ENCODE measurements at regions of chr19 and their contacts with region 1.

Region 1: DNA sequence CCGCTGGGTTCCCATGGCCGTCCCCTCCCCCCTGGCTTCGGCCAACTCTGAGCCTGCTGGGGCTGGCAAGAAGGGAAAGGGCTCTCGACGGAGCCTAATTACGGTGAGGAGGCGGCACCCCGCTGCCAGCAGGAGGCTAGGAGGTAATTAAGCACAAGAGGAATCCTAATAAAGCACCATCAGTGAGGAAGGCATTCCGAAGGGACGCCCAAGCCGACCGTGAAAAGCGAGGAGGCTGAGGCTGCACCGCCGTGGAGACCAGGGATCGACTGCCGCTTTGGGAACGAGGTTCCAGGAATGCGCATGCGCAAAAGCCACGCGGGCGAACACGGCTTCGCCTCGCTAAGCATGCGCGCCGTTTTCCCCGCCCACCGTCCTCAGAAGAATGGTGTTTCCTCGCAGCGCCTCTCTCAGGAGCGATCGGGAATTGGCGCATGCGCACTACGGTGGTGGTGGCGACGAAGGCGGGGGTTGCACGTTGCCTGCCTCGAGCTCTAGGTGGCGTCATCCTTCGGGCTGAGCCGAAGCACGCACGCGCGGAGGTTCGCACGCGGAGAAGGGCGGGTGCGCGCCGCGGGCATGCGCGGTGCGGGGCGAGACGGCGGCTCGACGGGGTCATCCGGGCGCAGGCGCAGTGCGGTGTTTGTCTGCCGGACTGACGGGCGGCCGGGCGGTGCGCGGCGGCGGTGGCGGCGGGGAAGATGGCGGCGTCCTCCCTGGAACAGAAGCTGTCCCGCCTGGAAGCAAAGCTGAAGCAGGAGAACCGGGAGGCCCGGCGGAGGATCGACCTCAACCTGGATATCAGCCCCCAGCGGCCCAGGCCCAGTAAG is at the start of gene MAP2K7:
- DNase-seq: peak; percentile 99
- H3K4me3 ChIP-seq: peak within 1 kb of the TSS; percentile 92
- H3K27ac ChIP-seq: peak within 1 kb of the TSS; percentile 77
- H3K4me1 ChIP-seq: peaks cover 13% of the 10 kb centered on the region
- H3K27me3 ChIP-seq: no peaks in the 10 kb centered on the region
- CTCF ChIP-seq: peak; percentile 82
- total RNA-seq, gene MAP2K7: 46.1 and 46.7 TPM in 2 replicates

Region 2: DNA sequence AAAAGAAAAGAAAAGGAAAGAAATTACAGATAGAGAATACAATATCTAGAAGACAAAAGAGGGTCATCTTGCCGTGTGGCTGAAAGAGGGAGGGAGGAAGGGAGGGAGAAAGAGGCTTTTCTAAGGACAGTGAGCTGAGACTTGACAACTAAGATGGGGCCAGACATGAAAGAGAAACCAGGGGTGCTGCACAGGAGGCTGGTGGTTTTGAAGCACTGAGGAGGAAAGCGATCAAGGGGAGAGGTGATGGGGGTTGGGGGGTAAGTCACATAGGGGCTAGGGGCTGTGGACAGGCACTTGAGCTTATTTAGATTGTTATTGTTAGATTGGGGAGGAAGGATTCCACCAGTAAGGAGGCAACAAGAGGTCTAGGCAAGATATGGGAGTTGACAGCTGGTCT is 350.7 kb before region 1 on chr19:
- CTCF ChIA-PET with region 1: no interaction called
- POLR2A ChIA-PET with region 1: interaction called, 12 read pairs
- intact Hi-C with region 1: no loop called
- DNase-seq: no peak
- H3K4me3 ChIP-seq: no peak overlapping the region
- H3K27ac ChIP-seq: no peak overlapping the region
- H3K4me1 ChIP-seq: no peaks in the 10 kb centered on the region
- H3K27me3 ChIP-seq: no peaks in the 10 kb centered on the region
- CTCF ChIP-seq: no peak

Region 3: GRCh38 chr19:7868676-7869452 is 34.6 kb before region 1 on chr19:
- CTCF ChIA-PET with region 1: interaction called, 3 read pairs
- POLR2A ChIA-PET with region 1: no interaction called
- intact Hi-C with region 1: loop called (anchors 2 kb)
- DNase-seq: peak; percentile 91
- H3K4me3 ChIP-seq: peak overlapping the region; percentile 53
- H3K27ac ChIP-seq: peak overlapping the region; percentile 78
- H3K4me1 ChIP-seq: peaks cover 42% of the 10 kb centered on the region
- H3K27me3 ChIP-seq: no peaks in the 10 kb centered on the region
- CTCF ChIP-seq: peak; percentile 58; the same call in 1 of the 2 replicates

Region 4: DNA sequence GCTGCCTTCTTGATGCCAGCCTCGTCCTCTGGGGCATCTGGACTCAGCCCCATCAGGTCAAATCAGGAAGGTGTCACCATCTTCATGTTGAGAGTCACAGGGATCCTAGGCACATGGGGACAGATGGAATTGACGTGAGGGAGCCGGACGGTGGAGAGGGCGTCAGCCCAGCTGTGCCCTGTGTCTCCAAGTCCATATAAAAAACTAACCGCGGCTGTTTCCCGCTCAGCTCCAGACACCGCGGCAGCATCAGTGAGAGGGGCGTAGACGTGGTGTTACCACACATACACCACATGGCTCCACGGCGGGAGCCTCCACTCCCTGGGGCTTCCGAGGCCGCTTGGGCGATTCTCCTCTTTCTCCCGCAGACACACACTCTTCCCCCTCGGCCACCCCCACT is 23.6 kb before region 1 on chr19:
- CTCF ChIA-PET with region 1: no interaction called
- POLR2A ChIA-PET with region 1: no interaction called
- intact Hi-C with region 1: no loop called
- DNase-seq: peak; percentile 37
- H3K4me3 ChIP-seq: no peak overlapping the region
- H3K27ac ChIP-seq: no peak overlapping the region
- H3K4me1 ChIP-seq: no peaks in the 10 kb centered on the region
- H3K27me3 ChIP-seq: no peaks in the 10 kb centered on the region
- CTCF ChIP-seq: no peak

Measured in A673 (cell line).